ENCODE measurements at regions of chr10 and their contacts with region 1.

Region 1: GRCh38 chr10:123994417-123995081 is 98.8 kb downstream of the CHST15 start:
- DNase-seq: peak; percentile 96
- H3K27ac ChIP-seq: peak overlapping the region; percentile 95
- CTCF ChIP-seq: peak; percentile 94

Region 2: GRCh38 chr10:123721430-123722257 is 272.9 kb before region 1 on chr10:
- CTCF ChIA-PET with region 1: no interaction called
- POLR2A ChIA-PET with region 1: no interaction called
- DNase-seq: no peak
- H3K27ac ChIP-seq: no peak overlapping the region
- CTCF ChIP-seq: no peak

Region 3: DNA sequence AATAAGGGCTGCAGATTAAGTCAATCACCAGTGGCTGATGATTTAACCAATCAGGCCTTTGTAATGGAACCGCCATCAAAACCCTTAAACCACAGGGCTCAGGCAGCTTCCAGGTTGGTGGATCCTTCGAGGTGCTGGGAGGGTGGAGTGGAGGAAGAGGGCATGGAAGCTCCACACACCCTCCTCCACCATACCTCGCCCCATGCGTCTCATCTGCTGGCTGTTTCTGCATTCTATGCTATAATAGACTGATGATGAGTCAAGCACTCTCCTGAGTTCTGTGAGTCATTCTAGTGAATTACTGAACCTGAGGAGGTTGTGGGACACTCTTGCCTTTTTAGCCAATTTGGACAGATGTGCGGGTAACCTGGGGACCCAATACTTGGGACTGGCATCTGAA is 54.9 kb after region 1 on chr10:
- CTCF ChIA-PET with region 1: no interaction called
- POLR2A ChIA-PET with region 1: no interaction called
- DNase-seq: peak; percentile 92
- H3K27ac ChIP-seq: peak overlapping the region; percentile 62
- CTCF ChIP-seq: no peak

Region 4: GRCh38 chr10:124092860-124093773 is 98.6 kb after region 1 on chr10 and contains the start of gene CHST15:
- CTCF ChIA-PET with region 1: interaction called, 42 read pairs
- POLR2A ChIA-PET with region 1: interaction called, 3 read pairs
- DNase-seq: peak; percentile 91
- H3K27ac ChIP-seq: peak within 1 kb of the TSS; percentile 85
- CTCF ChIP-seq: peak; percentile 24

Region 5: DNA sequence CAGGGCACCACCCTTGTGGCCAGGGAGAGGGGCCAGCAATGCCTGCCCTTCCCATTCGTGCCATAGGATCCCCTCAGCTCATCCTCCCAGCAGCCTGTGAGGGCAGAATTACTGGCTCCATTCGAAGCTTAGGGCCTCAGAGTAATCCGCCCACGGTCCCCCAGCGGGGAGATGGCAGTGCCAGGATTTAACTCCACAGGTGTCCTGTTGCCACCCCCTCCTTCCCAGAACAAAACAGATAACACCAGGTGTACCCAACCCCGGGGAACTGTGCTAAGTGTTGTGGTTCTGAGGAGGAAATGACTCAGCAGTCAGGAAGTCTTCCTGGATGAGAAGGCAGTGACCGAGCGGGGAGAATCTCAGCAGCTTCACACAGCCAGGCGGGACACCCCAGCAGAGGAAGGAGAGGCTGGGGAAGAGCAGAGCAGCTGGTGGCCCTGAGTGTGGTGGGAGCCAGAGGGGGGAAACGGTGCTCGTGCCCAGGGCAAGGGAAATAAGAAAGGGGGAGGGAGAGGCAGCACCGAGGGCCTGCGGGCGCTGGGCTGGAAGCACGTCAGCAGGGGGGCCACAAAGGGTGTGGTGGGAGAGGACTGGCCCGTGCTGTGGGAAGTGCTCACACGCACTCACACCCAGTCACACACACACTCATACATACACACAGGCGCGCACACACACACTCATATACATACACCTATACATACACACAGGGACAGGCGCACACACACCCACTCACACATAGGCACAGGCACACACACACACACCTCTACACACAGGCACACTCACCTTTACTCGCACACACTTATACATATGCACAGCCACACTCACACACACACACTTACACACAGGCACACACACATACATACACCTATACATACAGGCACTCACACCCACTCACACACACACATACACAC is 158.6 kb after region 1 on chr10:
- CTCF ChIA-PET with region 1: interaction called, 14 read pairs
- POLR2A ChIA-PET with region 1: interaction called, 3 read pairs
- DNase-seq: peak; percentile 100
- H3K27ac ChIP-seq: peak overlapping the region; percentile 99
- CTCF ChIP-seq: no peak